Activated CD4-positive, alpha-beta T cell treated with anti-CD3 and anti-CD28 coated beads for 36 hours (primary cell): ENCODE measurements at regions of chr14 and their contacts with region 1.

Region 1: DNA sequence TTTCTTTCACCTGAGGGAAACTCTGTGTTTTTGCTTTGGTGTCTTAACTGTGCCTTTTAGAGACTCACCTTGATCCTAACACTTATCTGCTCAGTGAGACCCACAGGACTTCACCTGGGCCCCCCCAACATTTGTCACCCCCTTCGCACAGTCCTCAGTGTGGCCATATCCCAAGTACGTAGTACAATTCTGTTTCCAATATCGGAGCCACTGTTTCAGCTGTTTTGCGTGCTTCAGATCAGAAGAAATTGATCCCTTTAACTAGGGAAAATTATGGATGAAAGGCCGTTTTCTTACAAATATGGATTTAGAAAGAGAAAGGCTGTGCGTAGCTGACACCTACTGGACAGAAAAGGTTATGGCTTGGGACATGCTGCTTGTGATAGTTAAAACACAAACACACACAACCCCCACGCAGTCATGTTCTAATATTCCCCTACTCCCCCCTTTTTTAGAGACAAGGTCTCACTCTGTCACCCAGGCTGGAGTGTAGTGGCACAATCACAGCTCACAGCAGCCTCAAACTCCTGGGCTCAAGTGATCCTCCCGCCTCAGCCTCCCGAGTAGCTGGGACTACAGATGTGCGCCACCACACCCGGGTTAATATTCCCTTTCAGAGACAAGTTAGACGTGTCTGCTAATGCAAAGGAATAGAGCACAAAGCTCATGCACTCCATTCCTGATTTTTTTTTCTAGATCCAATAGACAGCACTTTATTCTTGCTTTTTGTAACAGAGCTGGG is 3.6 kb upstream of the SLC7A8 start:
- DNase-seq: peak; percentile 39
- ATAC-seq: peak; percentile 74
- H3K4me3 Mint-ChIP-seq: no peak overlapping the region
- H3K27ac Mint-ChIP-seq: no peak overlapping the region
- H3K4me1 Mint-ChIP-seq: peaks cover 2% of the 10 kb centered on the region
- H3K27me3 Mint-ChIP-seq: no peaks in the 10 kb centered on the region

Region 2: GRCh38 chr14:23076785-23077408 is 110.2 kb before region 1 on chr14:
- CTCF ChIA-PET with region 1: interaction called, 18 read pairs
- POLR2A ChIA-PET with region 1: no interaction called
- intact Hi-C with region 1: no loop called
- DNase-seq: peak; percentile 46
- ATAC-seq: peak; percentile 59
- H3K4me3 Mint-ChIP-seq: no peak overlapping the region
- H3K27ac Mint-ChIP-seq: peak overlapping the region; percentile 17
- H3K4me1 Mint-ChIP-seq: peaks cover 5% of the 10 kb centered on the region
- H3K27me3 Mint-ChIP-seq: no peaks in the 10 kb centered on the region

Region 3: GRCh38 chr14:23164250-23164649 is 22.8 kb before region 1 on chr14:
- CTCF ChIA-PET with region 1: no interaction called
- POLR2A ChIA-PET with region 1: no interaction called
- intact Hi-C with region 1: no loop called
- DNase-seq: no peak
- ATAC-seq: no peak
- H3K4me3 Mint-ChIP-seq: no peak overlapping the region
- H3K27ac Mint-ChIP-seq: no peak overlapping the region
- H3K4me1 Mint-ChIP-seq: peaks cover 7% of the 10 kb centered on the region
- H3K27me3 Mint-ChIP-seq: no peaks in the 10 kb centered on the region

Region 4: GRCh38 chr14:23174276-23175184 is 12.6 kb before region 1 on chr14:
- CTCF ChIA-PET with region 1: interaction called, 28 read pairs
- POLR2A ChIA-PET with region 1: interaction called, 3 read pairs
- intact Hi-C with region 1: no loop called
- DNase-seq: no peak
- ATAC-seq: no peak
- H3K4me3 Mint-ChIP-seq: no peak overlapping the region
- H3K27ac Mint-ChIP-seq: no peak overlapping the region
- H3K4me1 Mint-ChIP-seq: peaks cover 18% of the 10 kb centered on the region
- H3K27me3 Mint-ChIP-seq: peaks cover 10% of the 10 kb centered on the region

Region 5: GRCh38 chr14:23478111-23478759 is 291.2 kb after region 1 on chr14:
- CTCF ChIA-PET with region 1: no interaction called
- POLR2A ChIA-PET with region 1: no interaction called
- intact Hi-C with region 1: no loop called
- DNase-seq: peak; percentile 79
- ATAC-seq: peak; percentile 63
- H3K4me3 Mint-ChIP-seq: no peak overlapping the region
- H3K27ac Mint-ChIP-seq: no peak overlapping the region
- H3K4me1 Mint-ChIP-seq: peaks cover 11% of the 10 kb centered on the region
- H3K27me3 Mint-ChIP-seq: no peaks in the 10 kb centered on the region